Dorsolateral prefrontal cortex (tissue), 120 donors: ENCODE measurements at regions of chr10 and their contacts with region 1.

Region 1: GRCh38 chr10:132223156-132223590 is 36.4 kb downstream of the DPYSL4 start:
- DNase-seq: peak; percentile 76 to 91 (median 86)
- H3K4me3 ChIP-seq: no peak overlapping the region
- H3K27ac ChIP-seq: peak overlapping the region in 1 of 59 donors; percentile 15
- H3K27me3 ChIP-seq: no peaks in the 10 kb centered on the region
- CTCF ChIP-seq: peak; percentile 66 to 99 (median 94)

Region 2: GRCh38 chr10:132257271-132257670 is 34.1 kb after region 1 on chr10:
- intact Hi-C with region 1: no loop called
- DNase-seq: peak in 1 of 10 donors; percentile 50
- H3K4me3 ChIP-seq: no peak overlapping the region
- H3K27ac ChIP-seq: no peak overlapping the region
- H3K27me3 ChIP-seq: no peaks in the 10 kb centered on the region
- CTCF ChIP-seq: no peak

Region 3: DNA sequence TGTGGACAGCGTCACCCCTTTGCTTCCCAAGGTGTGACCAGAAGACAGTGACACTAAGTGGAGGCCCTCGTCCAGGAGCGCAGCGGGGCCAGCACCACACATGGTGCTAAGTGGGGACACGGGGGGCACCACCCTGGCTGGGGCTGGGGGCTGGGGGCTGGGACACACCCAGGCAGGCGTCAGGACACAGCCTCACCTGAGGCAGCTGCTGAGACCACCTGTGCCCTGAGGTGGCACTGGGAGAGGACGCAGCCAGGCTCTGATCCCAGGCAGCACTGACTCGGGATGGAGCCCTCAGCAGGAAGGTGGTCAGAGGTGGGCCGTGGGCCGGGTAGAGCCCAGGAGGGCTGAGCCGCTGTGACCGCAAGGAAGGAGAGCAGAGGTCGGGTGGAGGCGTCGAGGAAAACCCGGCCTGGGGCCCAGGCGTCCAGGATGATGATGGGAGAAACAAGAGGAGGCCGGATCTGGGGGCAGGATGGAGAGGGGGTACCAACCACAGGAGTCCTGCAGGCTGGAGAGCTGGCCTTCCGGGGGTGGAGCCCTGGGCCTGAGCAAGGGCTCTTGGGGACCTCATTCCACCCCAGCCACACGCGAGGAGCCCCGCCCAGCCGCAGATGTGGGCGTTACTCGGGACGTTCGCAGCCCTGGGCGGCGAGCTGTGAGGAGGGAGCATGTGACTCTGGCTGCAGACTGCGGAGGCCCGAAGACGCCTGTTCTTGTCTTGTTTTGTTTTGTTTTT is 131.4 kb after region 1 on chr10:
- intact Hi-C with region 1: loop called (anchors 1 to 5 kb)
- DNase-seq: peak in 6 of 10 donors; percentile 26 to 51 (median 43)
- H3K4me3 ChIP-seq: no peak overlapping the region
- H3K27ac ChIP-seq: peak overlapping the region in 7 of 59 donors; percentile 25 to 67 (median 37)
- H3K27me3 ChIP-seq: no peaks in the 10 kb centered on the region
- CTCF ChIP-seq: no peak